ENCODE measurements at regions of chr4 and their contacts with region 1.

Region 1: DNA sequence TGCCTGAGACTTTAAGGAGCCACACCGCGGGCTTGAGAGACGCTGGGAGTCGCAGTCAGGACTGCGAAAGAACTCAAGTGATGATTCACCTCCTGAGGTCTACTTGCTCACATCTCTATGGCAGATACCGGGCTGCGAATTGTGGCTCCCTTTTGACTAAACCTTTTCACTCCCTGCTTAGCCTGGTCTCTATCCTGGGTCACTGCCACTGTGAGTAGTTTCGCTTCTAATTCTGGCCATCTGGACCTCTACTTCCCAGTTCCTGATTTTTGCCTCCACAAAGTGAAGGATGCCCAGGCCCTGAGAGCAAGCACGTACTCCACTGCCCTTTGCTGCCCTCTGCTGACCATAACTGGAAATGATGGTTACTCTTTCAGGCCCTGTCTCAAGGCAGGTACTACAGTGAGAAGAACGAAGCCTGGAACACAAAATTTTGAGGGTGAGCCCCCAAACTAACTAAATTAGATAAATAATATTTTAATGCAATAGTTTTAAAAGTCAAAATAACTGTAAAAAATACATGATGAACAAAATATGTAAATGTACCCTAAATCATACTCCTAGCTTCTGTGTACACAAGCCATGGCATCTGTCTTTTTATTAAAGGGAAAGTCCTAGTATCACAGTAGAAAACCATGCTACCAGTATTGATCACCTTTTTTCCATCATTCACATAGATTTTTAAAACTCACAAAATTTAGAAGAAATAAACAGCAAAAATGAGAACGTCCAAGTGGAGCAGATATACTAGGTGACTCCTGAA is 16.7 kb downstream of the MAD2L1 start:
- DNase-seq: peak; percentile 81

Region 2: GRCh38 chr4:119559044-119559647 is 490.8 kb before region 1 on chr4:
- intact Hi-C with region 1: loop called (anchors 5 kb)
- DNase-seq: no peak

Region 3: GRCh38 chr4:119692001-119692400 is 357.9 kb before region 1 on chr4:
- intact Hi-C with region 1: loop called (anchors 1 kb)
- DNase-seq: no peak

Region 4: GRCh38 chr4:119785963-119786362 is 263.9 kb before region 1 on chr4:
- intact Hi-C with region 1: loop called (anchors 10 kb)
- DNase-seq: no peak